Activated CD8-positive, alpha-beta T cell treated with anti-CD3 and anti-CD28 coated beads for 36 hours (primary cell): ENCODE measurements at regions of chr16 and their contacts with region 1.

Region 1: DNA sequence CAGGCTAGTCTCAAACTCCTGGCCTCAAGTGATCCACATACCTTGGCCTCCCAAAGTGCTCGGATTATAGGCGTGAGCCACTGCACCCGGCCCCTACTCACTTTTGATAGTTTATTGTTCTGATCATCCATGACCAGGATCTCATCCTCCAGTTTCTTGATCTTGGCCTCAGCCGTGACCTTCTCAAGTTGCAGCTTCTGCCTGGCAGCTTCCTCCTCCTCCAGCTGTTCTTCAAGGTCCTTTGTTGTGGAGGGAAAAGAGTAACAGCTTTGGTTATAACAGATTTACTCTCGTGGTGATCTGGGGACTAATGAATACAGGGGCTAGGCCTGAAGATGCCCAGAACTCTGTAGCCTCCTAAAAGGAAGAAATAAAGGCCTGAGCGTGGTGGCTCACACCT is 89.9 kb downstream of the NDE1 start:
- DNase-seq: no peak
- ATAC-seq: no peak
- H3K4me3 Mint-ChIP-seq: no peak overlapping the region
- H3K27ac Mint-ChIP-seq: no peak overlapping the region
- H3K4me1 Mint-ChIP-seq: no peaks in the 10 kb centered on the region
- H3K27me3 Mint-ChIP-seq: no peaks in the 10 kb centered on the region
- CTCF ChIP-seq: no peak

Region 2: DNA sequence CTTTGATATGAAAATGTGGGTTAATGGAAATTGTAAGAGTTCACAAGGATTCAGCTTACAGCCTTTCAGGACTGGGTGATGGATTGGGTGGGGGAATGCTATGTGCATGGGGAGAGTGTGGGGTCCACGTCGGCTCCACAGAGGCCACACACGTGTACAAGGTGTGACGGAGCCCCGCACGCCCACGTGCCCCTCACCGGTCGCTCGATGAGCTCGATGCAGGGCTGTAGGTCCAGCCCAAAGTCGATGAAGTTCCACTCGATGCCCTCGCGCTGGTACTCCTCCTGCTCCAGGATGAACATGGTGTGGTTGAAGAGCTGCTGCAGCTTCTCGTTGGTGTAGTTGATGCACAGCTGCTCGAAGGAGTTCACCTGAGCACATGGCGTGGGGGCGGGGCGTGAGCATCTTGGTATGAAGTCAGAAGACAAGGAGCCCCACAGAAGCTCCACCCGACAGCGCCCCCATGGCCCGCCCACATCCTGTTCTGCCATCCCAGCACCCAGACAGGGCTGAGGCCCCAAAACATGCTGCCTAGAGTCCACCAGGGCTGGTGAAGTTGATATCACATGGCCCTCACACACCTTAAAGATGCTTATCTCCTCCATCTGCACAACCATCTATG is 17.8 kb after region 1 on chr16:
- CTCF ChIA-PET with region 1: interaction called, 21 read pairs
- POLR2A ChIA-PET with region 1: no interaction called
- intact Hi-C with region 1: no loop called
- DNase-seq: peak; percentile 54
- ATAC-seq: peak; percentile 47
- H3K4me3 Mint-ChIP-seq: no peak overlapping the region
- H3K27ac Mint-ChIP-seq: no peak overlapping the region
- H3K4me1 Mint-ChIP-seq: peaks cover 6% of the 10 kb centered on the region
- H3K27me3 Mint-ChIP-seq: peaks cover 5% of the 10 kb centered on the region
- CTCF ChIP-seq: no peak